ENCODE measurements at regions of chr17 and their contacts with region 1.

Region 1: DNA sequence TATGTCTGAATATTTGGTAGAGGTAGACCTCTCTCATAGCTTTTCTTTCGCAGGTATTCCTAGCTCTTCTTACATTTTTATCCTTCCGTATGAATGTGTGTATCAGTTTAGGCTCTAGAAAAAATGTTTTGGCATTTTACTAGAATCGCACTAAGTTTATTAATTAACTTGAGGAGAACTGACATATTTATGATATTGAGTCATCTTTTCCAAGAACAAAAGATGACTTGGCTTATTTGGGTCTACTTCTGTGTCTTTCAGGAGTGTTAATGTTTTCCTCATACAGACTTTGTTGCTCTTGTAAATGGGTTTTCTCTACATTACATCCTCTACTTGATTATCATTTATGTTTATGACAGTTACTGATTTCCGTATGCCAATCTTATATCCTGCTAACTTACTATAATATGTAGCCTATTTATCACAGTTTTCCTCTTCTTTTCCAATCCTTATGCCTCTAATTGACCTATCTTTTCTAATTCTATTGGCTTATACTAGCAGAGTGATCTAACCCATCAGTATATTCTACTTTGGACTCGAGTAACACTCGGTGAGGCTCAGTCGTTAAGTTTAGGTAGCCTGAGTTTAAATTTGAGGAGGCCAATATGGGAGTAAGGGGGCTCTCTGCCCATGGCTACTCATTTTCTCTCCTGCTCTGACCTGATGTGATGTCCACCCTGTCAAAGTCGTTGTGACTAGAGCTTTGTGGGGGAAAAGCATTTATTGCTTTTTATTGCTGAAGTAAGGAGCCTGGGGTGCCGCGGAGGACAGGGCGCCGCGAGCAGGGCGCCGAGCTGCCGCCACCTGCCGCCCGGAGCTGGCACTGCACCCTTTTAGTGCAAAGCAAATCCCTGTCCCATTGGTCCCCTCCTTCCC is 20.0 kb downstream of the ST6GALNAC1 start:
- DNase-seq: peak; percentile 94
- H3K4me3 ChIP-seq: peak overlapping the region in 1 of 2 experiments; percentile 15; a peak in 2 of 4 replicates
- H3K27ac ChIP-seq: peak overlapping the region; percentile 47 to 53; a peak in 3 of 4 replicates
- H3K4me1 ChIP-seq: 0 out of 4 replicates have a peak, but pooled peaks cover 0 to 8% of the 10 kb centered on the region in 2 experiments
- H3K27me3 ChIP-seq: peaks cover 19% of the 10 kb centered on the region; the same call in 1 of the 2 replicates
- CTCF ChIP-seq: peak; percentile 99
- EP300 ChIP-seq: peak in 1 of 2 experiments; percentile 3; a peak in 1 of 4 replicates
- RAD21 ChIP-seq: peak; percentile 91

Region 2: GRCh38 chr17:76515274-76515949 is 108.1 kb before region 1 on chr17:
- CTCF ChIA-PET with region 1: interaction called, 111 read pairs
- POLR2A ChIA-PET with region 1: no interaction called
- DNase-seq: no peak
- H3K4me3 ChIP-seq: no peak overlapping the region
- H3K27ac ChIP-seq: no peak overlapping the region
- H3K4me1 ChIP-seq: peaks cover 0 to 6% of the 10 kb centered on the region in 2 experiments; a peak in 1 of 4 replicates
- H3K27me3 ChIP-seq: peaks cover 27% of the 10 kb centered on the region; the same call in 1 of the 2 replicates
- CTCF ChIP-seq: no peak
- EP300 ChIP-seq: no peak
- RAD21 ChIP-seq: no peak

Region 3: DNA sequence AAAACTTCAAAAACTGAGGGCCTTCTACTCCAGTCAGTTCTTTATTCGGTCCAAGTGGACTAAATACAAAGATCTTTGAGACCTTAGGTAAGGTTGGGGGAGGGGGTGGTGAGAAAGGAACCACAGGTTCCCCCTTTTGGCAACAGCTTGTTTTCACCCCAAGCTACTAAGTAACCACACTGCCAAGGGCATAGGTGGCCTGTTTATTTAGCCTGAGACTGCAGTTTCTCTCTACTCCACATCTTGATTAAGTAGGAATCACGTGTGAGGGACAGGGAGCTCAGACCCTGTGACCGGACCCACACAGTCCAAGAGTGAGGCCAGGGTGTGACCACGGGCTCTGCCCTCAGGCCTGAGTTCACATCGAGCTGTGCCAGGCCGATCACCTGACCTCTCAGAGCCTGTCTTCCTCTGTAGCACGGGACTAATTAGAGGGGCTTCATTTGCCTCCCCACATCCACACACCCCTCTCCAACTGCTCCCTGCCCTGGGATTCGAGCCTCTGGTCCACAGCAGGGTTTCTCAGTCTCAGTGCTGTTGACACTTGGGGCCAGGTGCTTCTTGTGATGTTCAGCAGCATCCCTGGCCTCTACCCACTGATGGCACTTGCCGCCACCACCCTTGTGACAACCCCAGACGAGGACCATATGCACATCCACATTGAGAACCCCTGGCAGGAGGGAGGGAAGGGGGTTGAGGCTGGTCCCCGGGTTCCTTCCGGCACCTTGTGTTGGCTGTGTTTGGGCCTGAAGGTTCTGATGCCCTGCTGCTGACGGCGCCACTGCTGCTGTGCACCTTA is 55.7 kb before region 1 on chr17:
- CTCF ChIA-PET with region 1: interaction called, 206 read pairs
- POLR2A ChIA-PET with region 1: interaction called, 3 read pairs
- DNase-seq: peak; percentile 45
- H3K4me3 ChIP-seq: no peak overlapping the region
- H3K27ac ChIP-seq: no peak overlapping the region; a peak in 1 of 4 replicates
- H3K4me1 ChIP-seq: peaks cover 1 to 8% of the 10 kb centered on the region in 2 experiments; a peak in 2 of 4 replicates
- H3K27me3 ChIP-seq: no peaks in the 10 kb centered on the region
- CTCF ChIP-seq: no peak
- EP300 ChIP-seq: no peak
- RAD21 ChIP-seq: no peak

Region 4: DNA sequence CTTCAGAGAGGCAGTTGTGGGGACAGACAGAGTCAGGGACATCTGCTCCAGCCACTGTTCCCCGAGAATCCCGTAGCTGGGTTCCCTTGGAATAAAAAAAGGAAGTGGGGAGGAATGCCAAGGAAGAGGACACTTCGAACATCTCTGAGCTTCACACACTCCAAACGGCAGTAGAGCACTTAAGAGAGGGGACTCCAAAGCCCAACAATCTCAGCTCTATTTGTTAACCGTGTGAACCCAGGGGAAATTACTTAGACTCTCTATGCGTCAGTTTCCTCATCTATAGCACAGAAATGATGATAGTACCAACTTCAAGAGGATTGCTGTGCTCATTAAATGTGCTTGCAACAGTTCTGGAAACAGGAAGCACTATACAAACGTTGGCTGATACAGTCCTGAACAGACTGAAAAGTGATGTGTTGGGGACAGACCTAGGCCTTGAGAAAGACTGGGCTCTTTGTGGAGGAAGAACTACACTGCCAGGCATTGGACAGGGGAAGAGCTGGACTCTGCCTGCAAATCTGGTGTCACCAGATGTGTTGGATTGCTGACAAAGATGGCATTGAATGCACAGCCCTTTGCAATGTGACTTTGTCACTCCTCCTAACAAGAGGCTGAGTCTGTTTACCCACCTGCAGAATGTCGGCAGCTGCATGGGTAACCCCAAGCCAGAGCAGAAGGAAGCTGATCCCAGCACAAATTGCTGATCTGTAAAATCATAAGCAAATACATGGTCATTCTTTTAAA is 25.6 kb before region 1 on chr17:
- CTCF ChIA-PET with region 1: interaction called, 78 read pairs
- POLR2A ChIA-PET with region 1: no interaction called
- DNase-seq: no peak
- H3K4me3 ChIP-seq: no peak overlapping the region
- H3K27ac ChIP-seq: no peak overlapping the region
- H3K4me1 ChIP-seq: peaks cover 0 to 6% of the 10 kb centered on the region in 2 experiments; a peak in 2 of 4 replicates
- H3K27me3 ChIP-seq: no peaks in the 10 kb centered on the region
- CTCF ChIP-seq: no peak
- EP300 ChIP-seq: no peak
- RAD21 ChIP-seq: no peak

Region 5: DNA sequence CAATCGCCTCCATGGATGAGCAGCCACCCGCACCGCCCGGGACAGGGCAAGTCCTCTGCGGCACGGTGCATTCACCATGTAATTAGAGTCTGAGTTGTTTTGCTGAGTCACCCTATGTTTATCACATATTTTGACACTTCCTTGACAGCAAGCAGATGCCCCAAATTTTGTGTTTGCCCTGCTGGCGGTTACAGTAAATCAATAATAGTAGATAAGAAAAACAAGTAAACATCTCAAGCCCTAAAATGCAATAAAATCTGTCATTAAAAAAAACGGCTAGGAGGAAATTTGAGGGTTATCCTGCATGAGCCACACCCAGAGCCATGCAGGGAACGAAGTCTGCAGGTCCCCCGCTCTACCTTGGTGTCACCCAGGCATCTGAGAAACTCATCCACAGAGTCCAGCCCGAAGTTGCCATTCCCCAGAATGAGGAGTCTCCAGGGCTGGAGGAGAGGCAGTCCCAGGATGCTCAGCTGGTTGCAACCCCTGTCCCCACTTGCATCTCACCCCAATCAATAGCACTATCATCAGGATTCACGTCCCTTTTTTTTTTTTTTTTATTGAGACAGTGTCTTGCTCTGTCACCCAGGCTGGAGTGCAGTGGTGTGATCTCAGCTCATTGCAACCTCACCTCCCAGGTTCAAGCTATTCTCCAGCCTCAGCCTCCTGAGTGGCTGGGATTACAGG is 36.6 kb after region 1 on chr17:
- CTCF ChIA-PET with region 1: interaction called, 12 read pairs
- POLR2A ChIA-PET with region 1: no interaction called
- DNase-seq: peak; percentile 73
- H3K4me3 ChIP-seq: no peak overlapping the region
- H3K27ac ChIP-seq: no peak overlapping the region
- H3K4me1 ChIP-seq: peaks cover 0 to 10% of the 10 kb centered on the region in 2 experiments; a peak in 1 of 4 replicates
- H3K27me3 ChIP-seq: no peaks in the 10 kb centered on the region
- CTCF ChIP-seq: no peak
- EP300 ChIP-seq: peak in 1 of 2 experiments; percentile 63; a peak in 1 of 4 replicates
- RAD21 ChIP-seq: peak; percentile 14; the same call in 1 of the 2 replicates

Region 6: DNA sequence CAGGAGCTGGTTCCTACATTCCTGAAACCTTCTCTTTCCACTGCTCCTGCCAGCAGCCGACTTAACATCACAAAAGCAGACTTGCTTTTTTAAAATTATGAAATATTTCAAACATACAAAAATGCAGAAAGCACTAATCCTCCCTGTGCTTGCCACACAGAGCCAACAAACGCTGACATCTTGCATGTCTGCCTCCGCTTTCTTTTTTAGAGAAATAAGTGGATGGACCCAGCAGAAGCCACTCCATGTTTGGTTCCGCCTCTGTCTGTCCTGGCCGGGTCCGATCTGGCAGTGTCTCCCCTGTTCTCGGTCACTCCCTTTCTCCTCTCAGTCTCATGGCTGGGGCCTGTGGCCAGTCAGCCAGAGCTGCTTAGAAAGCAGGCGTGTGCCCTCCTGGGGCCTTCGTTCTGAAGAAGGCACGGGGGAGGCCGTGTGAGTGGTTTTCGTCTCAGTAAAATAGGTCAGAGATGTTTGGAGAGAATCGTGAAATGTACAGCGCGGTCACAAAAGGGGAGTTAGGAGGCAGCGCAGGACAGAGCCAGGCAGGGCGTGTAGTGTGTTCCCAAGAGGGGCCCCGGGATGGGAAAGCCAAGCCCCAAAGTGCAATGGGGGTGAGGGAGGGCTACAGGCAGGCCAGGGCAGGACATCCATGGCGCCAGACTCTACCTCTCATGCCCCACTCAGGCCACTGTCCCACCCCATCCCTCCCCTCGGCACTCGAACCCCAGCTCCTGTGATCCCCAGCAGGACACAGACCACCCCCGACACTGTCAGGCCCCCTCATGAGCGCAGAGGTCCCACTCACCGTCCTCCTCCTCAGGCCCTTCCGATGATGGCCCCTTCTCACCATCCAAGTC is 64.0 kb after region 1 on chr17:
- CTCF ChIA-PET with region 1: interaction called, 71 read pairs
- POLR2A ChIA-PET with region 1: no interaction called
- DNase-seq: no peak
- H3K4me3 ChIP-seq: no peak overlapping the region
- H3K27ac ChIP-seq: peak overlapping the region in 1 of 2 experiments; percentile 13; a peak in 2 of 4 replicates
- H3K4me1 ChIP-seq: peaks cover 0 to 20% of the 10 kb centered on the region in 2 experiments; a peak in 1 of 4 replicates
- H3K27me3 ChIP-seq: no peaks in the 10 kb centered on the region
- CTCF ChIP-seq: no peak
- EP300 ChIP-seq: no peak
- RAD21 ChIP-seq: no peak

Region 7: GRCh38 chr17:76772842-76773525 is 149.5 kb after region 1 on chr17:
- CTCF ChIA-PET with region 1: no interaction called
- POLR2A ChIA-PET with region 1: no interaction called
- DNase-seq: peak; percentile 64
- H3K4me3 ChIP-seq: peak overlapping the region; percentile 22 to 47; a peak in 3 of 4 replicates
- H3K27ac ChIP-seq: peak overlapping the region; percentile 71 to 88
- H3K4me1 ChIP-seq: peaks cover 5 to 13% of the 10 kb centered on the region in 2 experiments; a peak in 2 of 4 replicates
- H3K27me3 ChIP-seq: no peaks in the 10 kb centered on the region
- CTCF ChIP-seq: peak; percentile 40
- EP300 ChIP-seq: no peak
- RAD21 ChIP-seq: peak; percentile 41; the same call in 1 of the 2 replicates